PC-9 (cell line): ENCODE measurements at regions of chr2 and their contacts with region 1.

Region 1: GRCh38 chr2:62306751-62307468 is 111.0 kb downstream of the B3GNT2 start:
- DNase-seq: peak; percentile 81 to 99
- H3K4me3 ChIP-seq: peak overlapping the region; percentile 46
- H3K27ac ChIP-seq: peak overlapping the region; percentile 99
- H3K4me1 ChIP-seq: peaks cover 63% of the 10 kb centered on the region
- H3K27me3 ChIP-seq: no peaks in the 10 kb centered on the region
- CTCF ChIP-seq: no peak

Region 2: DNA sequence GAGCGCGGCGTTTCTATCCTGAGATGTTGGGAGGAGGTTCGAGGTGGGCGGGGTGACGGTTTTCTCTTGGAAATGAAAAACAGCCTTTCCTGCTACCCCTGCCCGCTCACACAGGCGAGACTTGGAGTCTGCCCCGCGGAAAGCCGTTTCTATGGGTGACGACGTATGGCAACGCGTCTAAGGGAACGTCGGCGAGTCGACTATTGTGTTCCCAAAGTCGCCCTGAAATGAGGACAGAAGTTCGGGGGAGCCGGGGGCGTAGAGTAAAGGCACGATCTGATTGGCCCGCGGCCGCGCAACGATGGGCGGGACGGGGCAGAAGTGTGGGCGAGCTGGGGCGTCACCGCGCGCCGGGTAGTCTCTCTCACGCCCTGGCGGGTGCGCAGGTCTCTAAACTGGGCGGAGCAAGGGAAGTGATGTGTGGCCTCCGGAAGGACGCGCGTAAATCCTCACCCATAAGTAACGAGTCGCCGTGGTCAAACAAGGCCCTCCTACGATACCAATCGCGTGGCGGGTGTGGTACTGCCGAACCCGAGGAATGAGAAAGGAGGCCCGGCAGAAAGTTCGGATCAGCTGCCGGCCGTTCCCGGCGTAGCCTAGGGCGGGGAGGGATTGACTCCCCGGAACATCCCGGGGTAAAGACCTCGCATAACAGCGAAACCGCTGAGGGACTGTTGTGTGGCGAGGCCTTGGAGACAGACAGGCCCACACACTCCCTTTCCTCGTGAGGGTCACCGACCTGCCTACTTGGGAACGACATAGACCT is 542.7 kb before region 1 on chr2:
- CTCF ChIA-PET with region 1: no interaction called
- POLR2A ChIA-PET with region 1: no interaction called
- intact Hi-C with region 1: loop called (anchors 5 kb)
- DNase-seq: peak; percentile 95 to 99
- H3K4me3 ChIP-seq: peak overlapping the region; percentile 77
- H3K27ac ChIP-seq: peak overlapping the region; percentile 98
- H3K4me1 ChIP-seq: peaks cover 45% of the 10 kb centered on the region
- H3K27me3 ChIP-seq: no peaks in the 10 kb centered on the region
- CTCF ChIP-seq: no peak

Region 3: GRCh38 chr2:61993444-61994024 is 313.4 kb before region 1 on chr2:
- CTCF ChIA-PET with region 1: no interaction called
- POLR2A ChIA-PET with region 1: no interaction called
- intact Hi-C with region 1: loop called (anchors 5 kb)
- DNase-seq: peak; percentile 26 to 53
- H3K4me3 ChIP-seq: no peak overlapping the region
- H3K27ac ChIP-seq: no peak overlapping the region
- H3K4me1 ChIP-seq: no peaks in the 10 kb centered on the region
- H3K27me3 ChIP-seq: no peaks in the 10 kb centered on the region
- CTCF ChIP-seq: peak; percentile 91

Region 4: GRCh38 chr2:62293490-62294271 is 13.2 kb before region 1 on chr2:
- CTCF ChIA-PET with region 1: no interaction called
- POLR2A ChIA-PET with region 1: interaction called, 4 read pairs
- intact Hi-C with region 1: loop called (anchors 1 kb)
- DNase-seq: peak; percentile 94 to 95
- H3K4me3 ChIP-seq: peak overlapping the region; percentile 46; the same call in 1 of the 2 replicates
- H3K27ac ChIP-seq: peak overlapping the region; percentile 93
- H3K4me1 ChIP-seq: peaks cover 55% of the 10 kb centered on the region
- H3K27me3 ChIP-seq: no peaks in the 10 kb centered on the region
- CTCF ChIP-seq: no peak

Region 5: GRCh38 chr2:62362561-62362960 is 55.7 kb after region 1 on chr2:
- CTCF ChIA-PET with region 1: no interaction called
- POLR2A ChIA-PET with region 1: interaction called, 3 read pairs
- intact Hi-C with region 1: loop called (anchors 2 kb)
- DNase-seq: peak; percentile 69 to 77
- H3K4me3 ChIP-seq: no peak overlapping the region
- H3K27ac ChIP-seq: no peak overlapping the region
- H3K4me1 ChIP-seq: peaks cover 6% of the 10 kb centered on the region; the same call in 1 of the 2 replicates
- H3K27me3 ChIP-seq: no peaks in the 10 kb centered on the region
- CTCF ChIP-seq: no peak

Region 6: GRCh38 chr2:62398356-62398755 is 91.4 kb after region 1 on chr2:
- CTCF ChIA-PET with region 1: no interaction called
- POLR2A ChIA-PET with region 1: no interaction called
- intact Hi-C with region 1: no loop called
- DNase-seq: no peak
- H3K4me3 ChIP-seq: no peak overlapping the region
- H3K27ac ChIP-seq: no peak overlapping the region
- H3K4me1 ChIP-seq: no peaks in the 10 kb centered on the region
- H3K27me3 ChIP-seq: no peaks in the 10 kb centered on the region
- CTCF ChIP-seq: no peak

Region 7: GRCh38 chr2:62672601-62673000 is 365.7 kb after region 1 on chr2:
- CTCF ChIA-PET with region 1: no interaction called
- POLR2A ChIA-PET with region 1: no interaction called
- intact Hi-C with region 1: no loop called
- DNase-seq: peak; percentile 54 to 58
- H3K4me3 ChIP-seq: no peak overlapping the region
- H3K27ac ChIP-seq: no peak overlapping the region
- H3K4me1 ChIP-seq: peaks cover 9% of the 10 kb centered on the region
- H3K27me3 ChIP-seq: no peaks in the 10 kb centered on the region
- CTCF ChIP-seq: no peak

Region 8: GRCh38 chr2:62705007-62705829 is 398.3 kb after region 1 on chr2 and contains the start of gene EHBP1:
- CTCF ChIA-PET with region 1: no interaction called
- POLR2A ChIA-PET with region 1: no interaction called
- intact Hi-C with region 1: loop called (anchors 5 kb)
- DNase-seq: peak; percentile 99 to 100
- H3K4me3 ChIP-seq: peak within 1 kb of the TSS; percentile 73
- H3K27ac ChIP-seq: peak within 1 kb of the TSS; percentile 80
- H3K4me1 ChIP-seq: peaks cover 37% of the 10 kb centered on the region
- H3K27me3 ChIP-seq: no peaks in the 10 kb centered on the region
- CTCF ChIP-seq: no peak
- total RNA-seq, gene EHBP1: 79.3 and 100 TPM in 2 replicates